Activated CD4-positive, alpha-beta memory T cell treated with anti-CD3 and anti-CD28 coated beads for 36 hours (primary cell): ENCODE measurements at regions of chr16 and their contacts with region 1.

Region 1: GRCh38 chr16:31032736-31033708 is at the start of gene STX4:
- DNase-seq: peak; percentile 99
- H3K4me3 Mint-ChIP-seq: peak within 1 kb of the TSS; percentile 95
- H3K27ac Mint-ChIP-seq: peak within 1 kb of the TSS; percentile 93
- H3K4me1 Mint-ChIP-seq: peaks cover 16% of the 10 kb centered on the region
- H3K27me3 Mint-ChIP-seq: no peaks in the 10 kb centered on the region
- total RNA-seq, gene STX4: 46.7 to 46.8 TPM

Region 2: DNA sequence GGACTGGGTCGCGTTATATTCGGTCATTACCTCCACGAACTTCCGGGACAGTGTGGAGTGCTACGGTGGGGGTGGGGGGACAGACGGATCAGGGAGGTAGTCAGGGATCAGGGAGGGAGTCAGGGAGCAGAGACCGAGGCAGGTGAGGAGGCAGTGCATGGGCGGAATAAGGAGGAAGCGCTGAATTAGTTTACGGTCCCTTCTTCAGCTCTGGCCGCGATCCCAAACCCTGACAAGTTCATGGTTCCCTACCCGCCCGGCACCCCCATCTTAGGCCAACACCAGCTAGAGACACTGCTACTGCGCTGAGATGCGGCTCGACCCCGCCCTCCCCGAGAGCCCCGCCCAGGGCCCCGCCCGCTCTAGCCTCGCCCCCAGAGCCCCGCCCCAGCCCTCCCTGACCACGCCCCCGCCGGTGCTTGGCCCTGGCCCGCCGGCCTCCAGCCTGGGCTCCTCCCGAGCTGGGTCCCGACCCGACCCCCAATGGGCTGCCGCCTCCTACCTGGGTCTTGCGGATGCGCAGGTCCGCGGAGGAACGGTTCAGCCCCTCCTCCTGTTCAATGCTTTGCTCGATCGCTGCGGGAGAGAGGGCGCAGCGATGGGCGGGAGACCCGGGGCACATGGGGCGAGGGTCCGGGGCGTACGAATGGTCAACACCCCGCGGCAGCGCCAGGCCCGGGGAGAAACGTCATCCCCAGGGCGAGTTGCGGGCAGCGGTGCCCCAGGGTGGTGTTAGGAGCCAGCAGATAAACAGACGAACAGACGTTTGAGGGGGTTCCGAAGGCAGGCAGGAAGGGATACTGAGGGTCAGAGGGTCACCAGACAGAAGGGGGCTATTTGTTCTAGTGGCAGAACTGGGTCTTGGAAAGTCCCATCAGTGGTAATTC is 35.8 kb before region 1 on chr16:
- CTCF ChIA-PET with region 1: no interaction called
- POLR2A ChIA-PET with region 1: no interaction called
- intact Hi-C with region 1: loop called (anchors 1 kb)
- DNase-seq: peak; percentile 90
- H3K4me3 Mint-ChIP-seq: peak overlapping the region; percentile 73
- H3K27ac Mint-ChIP-seq: no peak overlapping the region
- H3K4me1 Mint-ChIP-seq: peaks cover 12% of the 10 kb centered on the region
- H3K27me3 Mint-ChIP-seq: peaks cover 1% of the 10 kb centered on the region

Region 3: GRCh38 chr16:31108035-31108793 is 75.2 kb after region 1 on chr16 and contains the start of gene BCKDK:
- CTCF ChIA-PET with region 1: no interaction called
- POLR2A ChIA-PET with region 1: no interaction called
- intact Hi-C with region 1: loop called (anchors 5 kb)
- DNase-seq: peak; percentile 84
- H3K4me3 Mint-ChIP-seq: peak within 1 kb of the TSS; percentile 80
- H3K27ac Mint-ChIP-seq: peak within 1 kb of the TSS; percentile 90
- H3K4me1 Mint-ChIP-seq: peaks cover 18% of the 10 kb centered on the region
- H3K27me3 Mint-ChIP-seq: no peaks in the 10 kb centered on the region
- total RNA-seq, gene BCKDK: 38.5 to 40.5 TPM